BJ (cell line): ENCODE measurements at regions of chr6 and their contacts with region 1.

Region 1: DNA sequence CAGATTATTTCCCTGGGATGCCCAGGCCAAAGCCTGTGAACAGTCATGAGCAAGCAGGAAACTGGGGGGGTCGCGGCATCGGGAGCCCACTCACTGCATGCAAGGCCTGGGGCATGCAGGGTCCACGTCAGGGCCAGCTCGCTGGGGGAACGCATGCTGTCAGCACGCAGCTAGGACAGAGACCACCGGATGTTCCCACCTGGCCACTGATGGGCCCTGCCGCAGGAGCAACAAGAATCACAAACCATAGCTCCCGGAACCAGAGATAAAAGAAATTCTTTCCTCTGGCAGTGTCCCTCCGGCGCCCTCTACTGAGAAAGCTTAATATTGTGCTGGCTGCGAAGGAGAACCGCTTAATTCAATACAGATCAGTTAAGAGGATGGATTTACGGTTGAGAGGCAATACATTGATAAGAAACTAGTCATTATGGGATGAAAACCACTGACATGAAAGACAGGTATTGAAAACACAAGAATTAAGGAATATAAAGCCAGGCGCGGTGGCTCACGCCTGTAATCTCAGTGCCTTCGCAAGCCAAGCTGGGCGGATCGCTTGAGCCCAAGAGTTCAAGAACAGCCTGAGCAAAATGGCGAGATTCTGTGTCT is 32.6 kb downstream of the C6orf15 start:
- DNase-seq: no peak
- H3K4me3 ChIP-seq: no peak overlapping the region
- H3K27me3 ChIP-seq: no peaks in the 10 kb centered on the region
- CTCF ChIP-seq: peak; percentile 87

Region 2: DNA sequence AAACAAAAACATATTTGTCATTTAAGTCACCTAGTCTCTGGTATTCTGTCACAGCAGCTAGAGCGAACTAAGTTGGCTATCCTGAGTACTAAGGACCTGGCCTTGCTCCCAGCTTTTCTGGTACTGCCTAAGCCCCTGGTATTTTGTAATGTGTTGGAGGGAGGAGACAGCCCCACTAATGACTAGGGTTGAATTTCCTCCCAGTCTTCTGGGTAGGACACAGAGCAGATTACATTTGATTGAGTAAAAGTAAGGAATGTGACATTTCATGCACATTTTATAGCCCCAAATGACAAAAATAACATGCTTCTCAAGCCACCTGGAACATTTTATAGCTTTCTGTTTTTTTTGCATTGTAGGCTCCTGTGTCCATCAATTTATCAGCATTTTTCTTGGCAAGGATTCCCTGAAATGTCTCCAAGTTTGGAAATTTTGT is 243.3 kb before region 1 on chr6:
- CTCF ChIA-PET with region 1: interaction called, 13 read pairs
- POLR2A ChIA-PET with region 1: no interaction called
- DNase-seq: peak; percentile 49
- H3K4me3 ChIP-seq: no peak overlapping the region
- H3K27me3 ChIP-seq: no peaks in the 10 kb centered on the region; the same call in 1 of the 2 replicates
- CTCF ChIP-seq: no peak

Region 3: DNA sequence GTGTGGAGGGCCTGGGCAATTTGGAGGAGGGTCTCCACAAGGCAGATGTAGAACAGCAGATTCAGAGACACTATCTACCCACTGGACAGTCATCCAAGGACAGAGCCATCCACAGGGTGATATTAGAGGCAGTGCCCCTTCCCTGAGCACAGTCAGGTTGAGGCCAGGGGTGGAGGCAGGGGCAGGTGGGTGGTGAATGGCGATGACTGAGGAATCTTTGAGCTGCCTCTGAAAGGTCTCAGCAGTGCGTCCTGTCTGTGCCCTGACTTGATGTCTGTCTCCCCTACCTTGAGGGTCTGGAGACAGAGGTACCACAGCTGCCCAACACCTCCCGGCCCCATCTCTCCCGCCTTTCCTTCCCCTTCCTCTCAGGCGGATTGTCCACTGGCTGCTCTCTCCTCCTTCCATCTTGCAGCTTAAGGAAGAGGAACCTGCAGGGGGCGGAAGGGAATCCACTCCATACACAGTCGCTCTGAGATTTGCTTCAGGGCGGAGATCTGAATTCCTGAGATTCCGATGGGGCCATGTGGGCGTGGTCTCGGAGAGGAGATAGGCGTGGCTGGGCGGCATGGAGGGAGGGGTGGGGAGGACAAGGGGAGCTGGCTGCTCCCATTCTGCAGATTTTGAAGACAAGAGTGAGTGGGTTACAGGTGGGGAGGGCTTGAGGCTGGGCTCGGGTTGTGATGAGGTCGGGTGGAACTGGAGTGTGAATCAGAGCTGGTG is 137.3 kb before region 1 on chr6:
- CTCF ChIA-PET with region 1: interaction called, 12 read pairs
- POLR2A ChIA-PET with region 1: no interaction called
- DNase-seq: peak; percentile 35
- H3K4me3 ChIP-seq: no peak overlapping the region
- H3K27me3 ChIP-seq: peaks cover 10% of the 10 kb centered on the region
- CTCF ChIP-seq: peak; percentile 84

Region 4: DNA sequence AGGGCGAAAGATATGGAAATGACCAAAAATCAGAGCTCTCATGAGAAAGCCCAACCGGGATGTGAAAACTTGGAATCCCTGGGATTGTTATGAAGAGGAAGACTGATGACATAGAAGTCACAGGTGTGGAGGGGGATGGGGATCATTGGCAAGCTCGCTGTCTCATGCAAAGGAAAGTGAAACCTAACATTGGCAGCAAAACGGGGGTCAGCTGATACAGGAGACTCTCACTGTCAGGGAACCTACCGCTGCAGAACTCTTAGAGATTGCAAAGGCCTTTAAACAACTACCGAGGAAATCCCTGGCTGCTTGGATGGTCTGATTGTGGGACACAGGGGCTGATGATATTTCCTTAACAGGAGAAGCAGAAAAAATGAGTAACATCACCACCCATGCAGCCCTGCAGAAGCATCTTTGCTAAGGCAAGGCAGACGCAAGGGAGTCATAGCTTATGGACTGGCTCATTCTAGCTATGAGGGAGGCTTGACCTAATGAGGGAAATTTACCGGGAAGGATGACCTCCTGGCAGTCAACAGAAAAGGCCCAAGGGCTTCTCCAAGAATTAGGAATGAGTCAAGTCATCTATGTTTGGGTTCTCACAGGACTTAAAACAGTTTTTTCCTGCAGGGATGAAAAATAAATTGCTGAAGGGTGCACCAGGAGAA is 89.2 kb before region 1 on chr6:
- CTCF ChIA-PET with region 1: no interaction called
- POLR2A ChIA-PET with region 1: no interaction called
- DNase-seq: no peak
- H3K4me3 ChIP-seq: no peak overlapping the region
- H3K27me3 ChIP-seq: no peaks in the 10 kb centered on the region; the same call in 1 of the 2 replicates
- CTCF ChIP-seq: no peak

Region 5: DNA sequence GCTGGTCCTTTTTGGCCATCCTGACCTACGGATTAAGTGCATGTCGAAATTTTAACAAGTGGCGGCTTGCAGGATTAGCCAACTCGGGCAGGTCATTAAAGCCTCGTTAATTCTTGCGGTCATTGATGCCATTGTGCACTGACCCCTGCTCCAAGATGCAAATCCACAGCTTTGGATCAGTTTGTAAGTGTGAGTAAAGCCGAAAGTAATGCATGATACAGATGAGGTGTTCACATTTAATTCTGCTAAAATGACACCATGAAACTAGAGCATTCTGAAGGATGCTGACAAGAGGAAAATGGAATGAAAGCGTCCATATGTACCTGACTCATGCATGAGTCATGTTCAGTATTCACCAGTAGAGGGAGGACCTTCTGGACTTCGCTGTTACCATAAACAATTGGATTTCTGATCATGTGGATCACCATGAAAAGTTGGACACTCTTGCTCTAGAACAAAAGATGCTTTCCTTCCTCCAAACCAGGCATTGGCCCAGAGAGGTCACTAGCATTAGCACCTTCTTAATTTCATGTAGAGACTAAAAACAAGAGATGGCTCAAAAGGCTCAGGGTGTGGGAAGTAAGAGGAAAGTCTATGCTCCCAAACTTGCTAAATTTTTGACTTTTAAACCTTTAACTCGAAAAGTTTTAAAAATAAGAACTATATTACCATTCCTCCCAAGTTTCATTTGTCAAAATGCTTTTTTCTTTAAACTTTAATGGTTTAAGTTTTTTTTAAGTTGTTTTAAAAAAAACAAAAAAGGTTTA is 21.4 kb before region 1 on chr6:
- CTCF ChIA-PET with region 1: interaction called, 12 read pairs
- POLR2A ChIA-PET with region 1: no interaction called
- DNase-seq: peak; percentile 66
- H3K4me3 ChIP-seq: no peak overlapping the region
- H3K27me3 ChIP-seq: peaks cover 4% of the 10 kb centered on the region
- CTCF ChIP-seq: peak; percentile 63

Region 6: DNA sequence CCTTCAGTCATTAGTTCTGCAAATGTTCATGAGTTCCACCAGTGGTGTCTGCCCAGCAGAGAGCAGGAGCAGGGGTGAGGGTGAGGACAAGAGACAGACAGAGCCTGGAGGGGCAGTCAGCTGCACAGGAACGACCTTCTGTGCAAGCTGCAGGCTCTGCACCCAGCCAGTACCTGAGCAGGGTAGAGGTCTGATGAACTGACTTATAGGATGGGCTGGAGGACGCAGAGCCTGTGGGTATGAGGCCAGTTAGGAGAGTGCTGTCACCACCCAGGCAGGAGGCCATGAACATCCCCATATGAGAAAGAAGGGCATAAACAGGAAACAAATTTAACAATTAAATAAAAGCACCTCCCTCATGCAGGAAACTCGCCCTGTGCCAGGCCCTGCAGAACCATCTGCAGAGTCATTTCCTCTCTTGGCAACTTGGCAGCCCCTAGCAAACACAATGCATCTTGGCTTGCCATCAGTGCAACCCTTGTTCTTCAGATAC is 14.7 kb after region 1 on chr6:
- CTCF ChIA-PET with region 1: interaction called, 20 read pairs
- POLR2A ChIA-PET with region 1: interaction called, 11 read pairs
- DNase-seq: no peak
- H3K4me3 ChIP-seq: no peak overlapping the region
- H3K27me3 ChIP-seq: no peaks in the 10 kb centered on the region; the same call in 1 of the 2 replicates
- CTCF ChIP-seq: no peak